ENCODE measurements at regions of chr19 and their contacts with region 1.

Region 1: DNA sequence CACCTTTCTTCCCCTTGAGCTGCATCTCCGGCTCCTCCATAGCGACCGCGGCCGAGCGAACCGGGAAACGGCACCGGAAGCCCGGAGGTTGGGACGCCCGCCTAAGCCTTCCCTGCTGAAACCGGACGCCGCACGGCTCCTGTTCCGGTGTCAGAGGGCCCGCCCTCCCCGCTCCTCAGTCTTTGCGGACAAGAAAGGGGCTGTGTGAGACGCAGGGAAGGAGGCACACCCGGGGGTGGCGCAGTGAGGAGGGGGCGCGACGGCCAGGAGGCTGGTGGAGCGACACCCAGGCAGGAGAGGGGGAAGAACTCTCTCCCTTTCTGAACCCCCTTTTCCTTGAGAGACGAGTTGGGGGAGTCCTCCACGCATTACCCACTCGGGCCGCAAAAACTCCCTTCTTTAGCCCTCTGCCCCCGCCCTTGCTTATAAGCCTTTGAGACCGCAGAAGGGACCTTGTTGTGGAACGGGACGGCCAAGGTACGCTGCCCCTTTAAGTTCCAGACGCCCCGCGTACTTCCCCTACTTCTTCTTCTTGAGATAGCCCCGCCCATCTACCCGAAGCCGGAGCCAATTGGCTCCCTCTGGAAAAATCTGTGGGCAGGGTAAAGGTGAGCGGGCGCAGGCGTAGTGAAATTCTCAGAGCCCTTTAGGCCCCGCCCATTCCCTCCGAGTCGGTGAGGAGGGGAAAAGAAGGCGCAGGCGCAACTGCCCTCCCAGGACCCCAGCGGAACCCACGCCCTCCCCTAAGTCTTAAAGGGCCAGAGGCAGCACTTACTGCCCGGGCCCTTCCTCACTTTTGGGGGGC is at the starts of genes BORCS8 and RFXANK:
- DNase-seq: peak; percentile 97 to 99 (median 98)
- H3K4me3 ChIP-seq: peak within 1 kb of the TSS; percentile 69 to 100 (median 85)
- H3K4me3 Mint-ChIP-seq: peak within 1 kb of the TSS; percentile 92 to 96
- H3K27ac ChIP-seq: peak within 1 kb of the TSS; percentile 100
- H3K27ac Mint-ChIP-seq: peak within 1 kb of the TSS; percentile 96 to 99 (median 98)
- H3K4me1 ChIP-seq: peaks cover 24 to 45% of the 10 kb centered on the region in 2 donors
- H3K4me1 Mint-ChIP-seq: peaks cover 36% of the 10 kb centered on the region
- H3K27me3 ChIP-seq: no peaks in the 10 kb centered on the region
- H3K27me3 Mint-ChIP-seq: peaks cover 0 to 1% (median 0%) of the 10 kb centered on the region in 3 donors
- CTCF ChIP-seq: no peak
- polyA plus RNA-seq, gene BORCS8: 31.6 to 44.1 (median 36.5) TPM
- polyA plus RNA-seq, gene RFXANK: 62.2 to 98.2 (median 66.6) TPM

Region 2: GRCh38 chr19:19203012-19203856 is 11.0 kb after region 1 on chr19 and contains the start of gene NR2C2AP:
- intact Hi-C with region 1: loop called in 1 of 2 experiments (anchors 1 kb)
- DNase-seq: peak; percentile 77 to 86 (median 86)
- H3K4me3 ChIP-seq: peak within 1 kb of the TSS; percentile 54 to 94 (median 79)
- H3K4me3 Mint-ChIP-seq: peak within 1 kb of the TSS; percentile 86 to 92
- H3K27ac ChIP-seq: peak within 1 kb of the TSS; percentile 84 to 87
- H3K27ac Mint-ChIP-seq: peak within 1 kb of the TSS; percentile 85 to 97 (median 91)
- H3K4me1 ChIP-seq: peaks cover 11 to 19% of the 10 kb centered on the region in 2 donors
- H3K4me1 Mint-ChIP-seq: peaks cover 26% of the 10 kb centered on the region
- H3K27me3 ChIP-seq: no peaks in the 10 kb centered on the region
- H3K27me3 Mint-ChIP-seq: peaks cover 4 to 16% (median 9%) of the 10 kb centered on the region in 3 donors
- CTCF ChIP-seq: no peak
- polyA plus RNA-seq, gene NR2C2AP: 6.4 to 7.8 (median 6.4) TPM

Region 3: DNA sequence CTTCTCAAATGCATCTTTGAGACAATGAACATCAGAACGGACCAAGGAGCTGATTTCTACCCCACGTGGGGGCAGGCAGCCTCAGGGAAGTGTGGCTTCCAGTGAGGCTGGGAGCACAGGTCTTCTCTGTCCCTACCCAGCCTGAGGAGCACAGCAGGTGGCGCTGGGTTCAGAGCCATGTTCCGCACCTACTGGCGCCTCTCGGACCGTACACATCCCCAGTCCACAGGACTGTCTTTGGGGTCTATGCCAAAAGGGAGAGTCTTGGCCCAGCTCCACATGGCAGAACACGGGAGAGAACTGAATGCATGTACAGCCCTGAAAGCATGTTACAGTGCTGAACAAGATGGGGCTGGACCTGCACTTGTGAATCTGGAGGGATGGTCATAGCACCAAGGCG is 105.5 kb after region 1 on chr19:
- intact Hi-C with region 1: no loop called
- DNase-seq: no peak
- H3K4me3 ChIP-seq: no peak overlapping the region
- H3K4me3 Mint-ChIP-seq: no peak overlapping the region
- H3K27ac ChIP-seq: no peak overlapping the region
- H3K27ac Mint-ChIP-seq: peak overlapping the region in 1 of 7 donors; percentile 13
- H3K4me1 ChIP-seq: no peaks in the 10 kb centered on the region
- H3K4me1 Mint-ChIP-seq: no peaks in the 10 kb centered on the region
- H3K27me3 ChIP-seq: no peaks in the 10 kb centered on the region
- H3K27me3 Mint-ChIP-seq: peaks cover 0 to 3% (median 2%) of the 10 kb centered on the region in 3 donors
- CTCF ChIP-seq: no peak

Region 4: GRCh38 chr19:19320362-19321142 is 128.3 kb after region 1 on chr19 and contains the starts of genes MAU2 and SUGP1:
- intact Hi-C with region 1: loop called (anchors 5 to 10 kb)
- DNase-seq: peak; percentile 84 to 85 (median 85)
- H3K4me3 ChIP-seq: peak within 1 kb of the TSS; percentile 87 to 99 (median 90)
- H3K4me3 Mint-ChIP-seq: peak within 1 kb of the TSS; percentile 90 to 99
- H3K27ac ChIP-seq: peak within 1 kb of the TSS; percentile 89 to 95
- H3K27ac Mint-ChIP-seq: peak within 1 kb of the TSS; percentile 97 to 100 (median 100)
- H3K4me1 ChIP-seq: peaks cover 24 to 25% of the 10 kb centered on the region in 2 donors
- H3K4me1 Mint-ChIP-seq: peaks cover 29% of the 10 kb centered on the region
- H3K27me3 ChIP-seq: no peaks in the 10 kb centered on the region
- H3K27me3 Mint-ChIP-seq: no peaks in the 10 kb centered on the region
- CTCF ChIP-seq: peak; percentile 41
- polyA plus RNA-seq, gene MAU2: 7.4 to 68.4 (median 14.5) TPM
- polyA plus RNA-seq, gene SUGP1: 17.4 to 38.8 (median 18.1) TPM

Measured in CD14-positive monocyte (primary cell).